Left cardiac atrium (tissue), 4 donors: ENCODE measurements at regions of chr3 and their contacts with region 1.

Region 1: DNA sequence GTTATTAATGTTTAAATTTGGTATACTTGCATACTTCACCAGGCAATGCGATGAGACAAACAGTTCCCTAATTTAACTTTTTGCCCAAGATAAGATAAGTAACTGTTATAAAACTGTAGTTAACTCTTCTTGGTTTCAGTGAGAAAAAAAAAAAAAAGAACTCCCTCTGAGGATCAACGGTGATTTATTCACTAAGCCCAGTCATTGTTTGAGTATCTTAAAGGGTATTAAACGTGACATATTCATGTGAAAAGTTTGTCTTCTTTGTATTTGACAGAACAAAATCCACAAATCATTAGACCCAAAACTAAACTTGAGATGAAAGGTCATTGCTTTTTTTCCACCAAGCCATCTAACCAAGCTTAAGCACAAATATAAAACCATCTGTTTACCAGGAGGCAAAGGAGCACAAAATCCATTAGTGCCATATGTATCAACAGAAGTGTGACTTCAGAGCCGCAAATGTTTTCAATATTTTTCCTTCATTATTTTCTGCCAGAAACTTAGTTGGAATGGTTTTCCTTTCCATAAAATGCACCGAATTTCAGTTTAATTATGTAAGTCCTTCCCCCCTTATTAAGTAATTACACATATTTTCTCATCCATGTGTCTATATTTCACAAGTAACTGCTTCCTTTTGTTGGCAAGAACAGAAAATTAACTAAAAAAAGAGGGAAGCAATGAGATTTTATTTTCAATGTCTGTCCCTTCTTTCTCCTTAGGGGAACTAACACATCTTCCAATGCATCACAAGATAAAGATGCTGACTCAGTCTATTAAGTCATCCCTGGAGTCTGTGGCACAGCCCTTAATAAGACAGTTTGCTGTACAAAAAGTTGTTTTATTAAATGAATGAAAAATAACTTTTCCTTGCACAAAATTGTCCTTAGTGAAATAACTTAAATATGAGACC is 92.2 kb upstream of the RAP2B start:
- DNase-seq: no peak
- ATAC-seq: peak in 1 of 2 donors; percentile 90

Region 2: GRCh38 chr3:153038779-153039178 is 31.1 kb before region 1 on chr3:
- intact Hi-C with region 1: no loop called
- DNase-seq: no peak
- ATAC-seq: no peak

Region 3: DNA sequence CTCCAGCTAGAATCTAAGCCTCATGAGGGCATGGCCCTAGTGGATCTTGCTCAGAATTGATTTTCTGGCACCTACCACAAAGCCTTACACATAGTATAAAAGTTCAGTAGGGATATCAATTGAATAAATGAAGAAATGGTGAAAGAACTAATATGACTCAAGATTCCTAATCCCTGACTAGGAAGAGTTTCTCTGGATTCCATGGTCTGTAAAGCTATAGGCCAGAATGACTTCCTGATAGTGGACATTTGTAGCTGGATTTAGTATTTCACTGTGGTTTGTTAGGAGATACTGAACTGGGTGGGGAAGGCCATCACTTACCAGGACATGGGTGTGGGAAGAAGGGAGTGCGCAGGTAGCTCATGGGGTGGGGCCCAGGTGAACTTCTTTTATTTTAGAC is 261.0 kb after region 1 on chr3:
- intact Hi-C with region 1: loop called in 1 of 2 experiments (anchors 5 kb)
- DNase-seq: no peak
- ATAC-seq: no peak

Region 4: GRCh38 chr3:153426803-153427202 is 356.9 kb after region 1 on chr3:
- intact Hi-C with region 1: no loop called
- DNase-seq: no peak
- ATAC-seq: no peak